HepG2 (cell line): ENCODE measurements at regions of chr2 and their contacts with region 1.

Region 1: DNA sequence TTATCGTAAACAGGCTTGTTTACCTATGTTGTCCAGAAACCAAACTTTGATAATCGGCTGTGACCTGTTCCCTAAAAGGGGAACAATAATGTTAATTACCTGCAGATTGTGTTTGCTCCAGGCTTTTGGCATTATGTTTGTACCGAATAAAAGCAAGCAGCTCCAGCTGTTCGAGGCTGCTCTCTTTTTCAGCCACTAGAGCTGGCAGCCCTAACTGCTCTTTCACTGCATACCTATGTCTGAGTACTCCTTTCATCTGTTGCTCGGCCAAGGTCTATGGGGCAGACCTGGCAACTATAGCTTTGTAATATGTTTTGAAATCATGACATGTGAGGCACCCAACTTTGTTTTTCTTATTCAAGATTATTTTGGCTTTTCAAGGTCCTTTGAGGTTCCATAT is 77.8 kb upstream of the EHBP1 start:
- DNase-seq: peak; percentile 66
- ATAC-seq: peak; percentile 97
- H3K4me3 ChIP-seq: no peak overlapping the region
- H3K27ac ChIP-seq: no peak overlapping the region
- H3K4me1 ChIP-seq: peaks cover 21% of the 10 kb centered on the region
- H3K27me3 ChIP-seq: no peaks in the 10 kb centered on the region
- CTCF ChIP-seq: 0 out of 2 replicates have a peak, but pooled peaks have one; percentile 5
- EP300 ChIP-seq: 0 out of 4 replicates have a peak, but pooled peaks of 1 of the 2 experiments have one; percentile 11
- POLR2A ChIP-seq: no peak
- RAD21 ChIP-seq: no peak

Region 2: DNA sequence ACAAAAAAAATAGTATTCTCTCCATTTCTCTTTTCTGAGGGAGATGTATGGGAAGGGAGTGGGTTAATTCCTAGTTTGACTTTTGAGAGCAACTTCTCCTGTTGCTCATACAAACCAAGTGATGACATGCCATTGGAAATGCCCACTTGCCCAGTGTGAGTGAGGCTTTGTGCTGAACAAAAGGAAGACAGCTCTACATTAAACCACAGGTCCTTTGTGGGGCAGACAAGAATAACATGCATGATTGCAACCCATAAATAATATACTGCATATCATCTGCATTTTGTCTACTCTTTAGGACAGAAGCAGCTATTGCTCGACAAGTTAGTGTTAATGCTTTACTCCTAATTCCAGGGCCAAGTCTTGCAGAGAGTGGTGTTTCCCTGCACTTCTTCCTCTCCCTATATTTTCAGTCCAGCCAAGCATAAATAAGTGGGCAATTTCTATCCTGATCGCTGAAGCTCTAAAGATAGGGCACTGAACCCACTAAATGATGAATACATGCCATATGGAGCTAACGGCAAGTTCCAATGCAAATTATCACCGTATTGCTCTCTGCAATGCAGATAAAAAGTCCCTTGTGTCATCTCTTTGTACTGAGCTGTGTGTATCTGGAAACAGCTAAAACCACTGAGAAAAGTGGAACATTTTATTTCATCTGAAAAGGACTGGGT is 58.5 kb after region 1 on chr2:
- CTCF ChIA-PET with region 1: no interaction called
- POLR2A ChIA-PET with region 1: no interaction called
- in situ Hi-C with region 1: no loop called
- intact Hi-C with region 1: loop called (anchors 2 kb)
- DNase-seq: no peak
- ATAC-seq: no peak
- H3K4me3 ChIP-seq: no peak overlapping the region
- H3K27ac ChIP-seq: no peak overlapping the region
- H3K4me1 ChIP-seq: no peaks in the 10 kb centered on the region
- H3K27me3 ChIP-seq: no peaks in the 10 kb centered on the region
- CTCF ChIP-seq: no peak
- EP300 ChIP-seq: no peak
- POLR2A ChIP-seq: no peak
- RAD21 ChIP-seq: no peak